Heart right ventricle (tissue), 16 donors: ENCODE measurements at regions of chr2 and their contacts with region 1.

Region 1: DNA sequence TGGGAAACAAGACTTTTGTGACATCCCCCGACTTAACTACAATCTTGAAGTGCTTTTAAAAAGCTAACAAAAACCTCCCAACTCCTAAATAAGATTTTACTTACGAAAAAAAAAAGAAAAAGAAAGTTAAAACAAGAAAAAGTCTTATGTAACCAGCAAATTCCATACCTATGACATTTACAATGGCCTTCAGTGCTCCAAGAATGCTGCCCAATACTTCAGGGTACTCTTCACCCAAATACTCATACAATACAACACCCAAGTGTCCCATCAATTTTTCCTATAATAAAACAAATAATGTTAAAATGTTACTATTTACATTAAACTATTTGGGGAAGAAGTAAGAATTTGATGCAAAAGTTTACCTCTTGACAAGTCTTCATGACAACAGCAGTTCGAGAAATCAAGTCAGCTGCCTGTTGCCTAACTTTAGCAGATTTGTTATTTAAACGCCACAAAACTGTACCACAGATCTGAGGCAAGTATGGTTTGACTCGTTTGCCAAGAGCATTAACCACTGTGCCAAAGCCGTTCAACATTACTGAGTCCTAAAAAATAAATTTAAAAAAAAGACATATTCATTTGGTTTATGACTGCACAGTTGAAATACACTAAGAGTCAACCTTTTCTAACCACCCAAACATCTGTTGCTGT is 34.8 kb downstream of the SF3B1 start:
- DNase-seq: no peak
- ATAC-seq: no peak
- H3K4me3 ChIP-seq: no peak overlapping the region
- H3K27ac ChIP-seq: no peak overlapping the region
- H3K4me1 ChIP-seq: no peaks in the 10 kb centered on the region
- H3K27me3 ChIP-seq: no peaks in the 10 kb centered on the region
- CTCF ChIP-seq: no peak

Region 2: DNA sequence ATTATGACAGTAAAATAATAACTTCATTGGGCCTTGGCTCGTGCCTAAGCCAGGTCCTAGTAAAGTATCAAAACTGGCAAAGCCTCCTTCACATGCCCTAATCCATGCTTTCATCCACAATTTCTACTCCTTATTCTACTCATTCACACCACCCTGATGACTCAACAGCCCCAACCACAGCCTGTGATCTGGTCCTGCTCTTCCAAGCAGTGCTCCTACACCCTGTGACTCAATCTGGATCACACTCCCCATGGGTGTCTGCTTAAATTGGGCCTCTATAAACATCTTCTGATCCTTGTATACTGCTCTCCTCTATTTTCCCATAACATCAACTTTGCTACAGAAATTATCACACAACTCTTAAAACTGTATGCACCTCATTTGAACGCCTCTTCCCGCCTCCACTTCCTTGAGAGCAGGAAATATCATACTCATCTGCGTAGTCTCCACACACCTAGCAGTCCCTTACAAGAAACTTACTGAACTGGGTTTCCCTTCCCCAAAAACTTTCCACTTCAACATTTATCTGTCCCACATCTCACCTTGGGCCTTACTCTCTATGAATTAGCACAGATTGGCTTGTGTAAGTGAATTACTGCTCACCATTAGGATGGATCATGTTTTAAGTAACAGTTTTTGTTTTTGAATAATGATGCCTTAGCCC is 616.5 kb before region 1 on chr2:
- intact Hi-C with region 1: loop called in 3 of 10 experiments (anchors 10 kb)
- DNase-seq: no peak
- ATAC-seq: no peak
- H3K4me3 ChIP-seq: no peak overlapping the region
- H3K27ac ChIP-seq: no peak overlapping the region
- H3K4me1 ChIP-seq: no peaks in the 10 kb centered on the region
- H3K27me3 ChIP-seq: no peaks in the 10 kb centered on the region
- CTCF ChIP-seq: no peak

Region 3: GRCh38 chr2:197477797-197478196 is 77.8 kb after region 1 on chr2:
- intact Hi-C with region 1: loop called in 1 of 10 experiments (anchors 10 kb)
- DNase-seq: no peak
- ATAC-seq: no peak
- H3K4me3 ChIP-seq: no peak overlapping the region
- H3K27ac ChIP-seq: peak overlapping the region in 2 of 10 donors; percentile 47 to 49
- H3K4me1 ChIP-seq: peaks cover 0 to 17% (median 2%) of the 10 kb centered on the region in 9 donors
- H3K27me3 ChIP-seq: no peaks in the 10 kb centered on the region
- CTCF ChIP-seq: no peak

Region 4: GRCh38 chr2:197904446-197904845 is 504.4 kb after region 1 on chr2:
- intact Hi-C with region 1: no loop called
- DNase-seq: no peak
- ATAC-seq: no peak
- H3K4me3 ChIP-seq: no peak overlapping the region
- H3K27ac ChIP-seq: no peak overlapping the region
- H3K4me1 ChIP-seq: peaks cover 0 to 47% (median 29%) of the 10 kb centered on the region in 9 donors
- H3K27me3 ChIP-seq: peaks cover 0 to 8% (median 0%) of the 10 kb centered on the region in 7 donors
- CTCF ChIP-seq: no peak